ENCODE measurements at regions of chr15 and their contacts with region 1.

Region 1: GRCh38 chr15:74799856-74800547 is 12.6 kb upstream of the LMAN1L start:
- DNase-seq: peak; percentile 34 to 96
- H3K4me3 ChIP-seq: no peak overlapping the region
- H3K27ac ChIP-seq: no peak overlapping the region
- H3K4me1 ChIP-seq: peaks cover 0 to 5% (median 2%) of the 10 kb centered on the region in 4 experiments; a peak in 3 of 7 replicates
- H3K27me3 ChIP-seq: no peaks in the 10 kb centered on the region
- CTCF ChIP-seq: peak; percentile 96 to 99 (median 99)
- EP300 ChIP-seq: peak in 1 of 2 experiments; percentile 23; a peak in 1 of 3 replicates
- POLR2A ChIP-seq: no peak
- RAD21 ChIP-seq: peak; percentile 88 to 91

Region 2: GRCh38 chr15:74511583-74511982 is 288.4 kb before region 1 on chr15:
- CTCF ChIA-PET with region 1: no interaction called
- POLR2A ChIA-PET with region 1: no interaction called
- DNase-seq: no peak
- H3K4me3 ChIP-seq: no peak overlapping the region
- H3K27ac ChIP-seq: no peak overlapping the region
- H3K4me1 ChIP-seq: no peaks in the 10 kb centered on the region; a peak in 1 of 7 replicates
- H3K27me3 ChIP-seq: no peaks in the 10 kb centered on the region
- CTCF ChIP-seq: no peak
- EP300 ChIP-seq: no peak
- POLR2A ChIP-seq: no peak
- RAD21 ChIP-seq: no peak

Region 3: DNA sequence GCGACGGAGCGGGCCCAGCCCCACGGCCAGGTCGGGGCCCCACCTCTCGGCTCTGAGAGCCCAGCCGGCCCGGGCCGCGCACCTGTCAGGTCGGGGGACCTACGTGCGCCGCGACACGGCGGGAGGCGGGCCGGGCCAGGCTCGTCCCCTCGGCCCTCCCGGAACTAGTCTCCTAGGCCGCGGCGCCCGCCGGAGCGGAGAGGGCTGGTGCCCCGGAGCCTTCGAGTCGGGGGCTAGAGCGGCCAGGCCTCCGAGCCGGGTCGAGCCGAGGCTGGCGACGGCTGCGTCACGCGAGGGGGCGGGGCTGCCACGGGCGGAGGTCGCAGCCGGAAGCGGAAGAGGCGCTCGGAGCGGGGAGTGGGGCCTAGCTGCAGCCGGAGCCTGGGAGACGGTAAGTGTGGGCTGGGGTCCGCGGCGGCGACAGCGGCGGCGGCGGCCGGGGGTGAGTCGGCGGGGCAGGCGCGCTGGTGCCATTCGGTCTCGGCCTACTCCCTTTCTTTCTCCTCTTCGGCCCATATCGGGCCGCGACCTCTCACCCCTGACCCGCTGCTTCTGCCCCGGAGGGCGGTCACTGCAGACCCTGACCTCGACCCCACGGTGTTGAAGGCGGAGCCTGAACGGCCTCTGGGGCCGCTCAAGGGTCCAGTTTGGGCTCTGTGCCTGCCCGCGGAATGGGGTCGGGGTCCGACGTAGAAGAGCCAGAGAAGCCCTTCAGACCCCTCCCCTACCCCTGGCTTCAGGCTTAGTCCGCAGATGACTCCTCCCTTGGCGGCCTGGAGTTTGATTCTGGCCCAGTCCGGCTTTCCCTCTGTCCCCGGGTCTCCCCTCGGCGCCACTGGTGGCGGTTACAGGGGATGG is 184.3 kb before region 1 on chr15 and contains the start of gene CLK3:
- CTCF ChIA-PET with region 1: interaction called, 1,439 read pairs
- POLR2A ChIA-PET with region 1: no interaction called
- DNase-seq: peak; percentile 79 to 98
- H3K4me3 ChIP-seq: peak within 1 kb of the TSS; percentile 80 to 96 (median 84)
- H3K27ac ChIP-seq: peak within 1 kb of the TSS; percentile 68
- H3K4me1 ChIP-seq: peaks cover 0 to 5% (median 2%) of the 10 kb centered on the region in 4 experiments; a peak in 5 of 7 replicates
- H3K27me3 ChIP-seq: peaks cover 0 to 15% (median 11%) of the 10 kb centered on the region in 4 experiments; a peak in 4 of 7 replicates
- CTCF ChIP-seq: peak in 1 of 3 experiments; percentile 11; a peak in 1 of 4 replicates
- EP300 ChIP-seq: 0 out of 3 replicates have a peak, but pooled peaks of 1 of the 2 experiments have one; percentile 17
- POLR2A ChIP-seq: peak in 1 of 2 experiments; percentile 85; a peak in 2 of 3 replicates
- RAD21 ChIP-seq: peak in 1 of 2 experiments; percentile 14; a peak in 1 of 4 replicates
- total RNA-seq, gene CLK3: 42.4 and 43.5 TPM in 2 replicates

Region 4: GRCh38 chr15:74739905-74740304 is 60.1 kb before region 1 on chr15:
- CTCF ChIA-PET with region 1: no interaction called
- POLR2A ChIA-PET with region 1: no interaction called
- DNase-seq: no peak
- H3K4me3 ChIP-seq: no peak overlapping the region
- H3K27ac ChIP-seq: no peak overlapping the region
- H3K4me1 ChIP-seq: no peaks in the 10 kb centered on the region
- H3K27me3 ChIP-seq: peaks cover 0 to 3% (median 0%) of the 10 kb centered on the region in 4 experiments; a peak in 2 of 7 replicates
- CTCF ChIP-seq: no peak
- EP300 ChIP-seq: no peak
- POLR2A ChIP-seq: no peak
- RAD21 ChIP-seq: no peak

Region 5: GRCh38 chr15:74781431-74782258 is 18.4 kb before region 1 on chr15 and contains the start of gene CSK:
- CTCF ChIA-PET with region 1: interaction called, 543 read pairs
- POLR2A ChIA-PET with region 1: interaction called, 20 read pairs
- DNase-seq: peak in 1 of 2 experiments; percentile 79
- H3K4me3 ChIP-seq: peak within 1 kb of the TSS; percentile 55 to 82 (median 60)
- H3K27ac ChIP-seq: no peak within 1 kb of the TSS
- H3K4me1 ChIP-seq: peaks cover 4 to 25% (median 20%) of the 10 kb centered on the region in 4 experiments
- H3K27me3 ChIP-seq: peaks cover 0 to 15% (median 11%) of the 10 kb centered on the region in 4 experiments; a peak in 6 of 7 replicates
- CTCF ChIP-seq: peak; percentile 44 to 72 (median 50)
- EP300 ChIP-seq: no peak
- POLR2A ChIP-seq: no peak
- RAD21 ChIP-seq: no peak; a peak in 1 of 4 replicates
- total RNA-seq, gene CSK: 50.2 and 51.7 TPM in 2 replicates

Region 6: GRCh38 chr15:74787251-74788041 is 12.6 kb before region 1 on chr15:
- CTCF ChIA-PET with region 1: interaction called, 46 read pairs
- POLR2A ChIA-PET with region 1: interaction called, 20 read pairs
- DNase-seq: peak in 1 of 2 experiments; percentile 71
- H3K4me3 ChIP-seq: no peak overlapping the region
- H3K27ac ChIP-seq: no peak overlapping the region
- H3K4me1 ChIP-seq: peaks cover 4 to 34% (median 22%) of the 10 kb centered on the region in 4 experiments
- H3K27me3 ChIP-seq: no peaks in the 10 kb centered on the region
- CTCF ChIP-seq: peak; percentile 79 to 95 (median 88)
- EP300 ChIP-seq: no peak
- POLR2A ChIP-seq: no peak
- RAD21 ChIP-seq: peak; percentile 11 to 47; a peak in 2 of 4 replicates

Region 7: GRCh38 chr15:74816808-74817674 is 17.0 kb after region 1 on chr15:
- CTCF ChIA-PET with region 1: interaction called, 64 read pairs
- POLR2A ChIA-PET with region 1: interaction called, 4 read pairs
- DNase-seq: no peak
- H3K4me3 ChIP-seq: no peak overlapping the region
- H3K27ac ChIP-seq: no peak overlapping the region
- H3K4me1 ChIP-seq: peaks cover 0 to 12% (median 6%) of the 10 kb centered on the region in 4 experiments; a peak in 6 of 7 replicates
- H3K27me3 ChIP-seq: no peaks in the 10 kb centered on the region
- CTCF ChIP-seq: peak in 2 of 3 experiments; percentile 35 to 41; a peak in 3 of 4 replicates
- EP300 ChIP-seq: no peak
- POLR2A ChIP-seq: no peak
- RAD21 ChIP-seq: peak in 1 of 2 experiments; percentile 26; a peak in 1 of 4 replicates

Measured in H1 (cell line).